PC-3 (cell line): ENCODE measurements at regions of chr21 and their contacts with region 1.

Region 1: GRCh38 chr21:28537371-28538079 is 455.2 kb downstream of the LTN1 start:
- DNase-seq: peak; percentile 99
- ATAC-seq: peak; percentile 44
- H3K4me3 ChIP-seq: no peak overlapping the region
- H3K27ac ChIP-seq: peak overlapping the region; percentile 97
- H3K4me1 ChIP-seq: peaks cover 52% of the 10 kb centered on the region
- H3K27me3 ChIP-seq: no peaks in the 10 kb centered on the region
- CTCF ChIP-seq: no peak

Region 2: DNA sequence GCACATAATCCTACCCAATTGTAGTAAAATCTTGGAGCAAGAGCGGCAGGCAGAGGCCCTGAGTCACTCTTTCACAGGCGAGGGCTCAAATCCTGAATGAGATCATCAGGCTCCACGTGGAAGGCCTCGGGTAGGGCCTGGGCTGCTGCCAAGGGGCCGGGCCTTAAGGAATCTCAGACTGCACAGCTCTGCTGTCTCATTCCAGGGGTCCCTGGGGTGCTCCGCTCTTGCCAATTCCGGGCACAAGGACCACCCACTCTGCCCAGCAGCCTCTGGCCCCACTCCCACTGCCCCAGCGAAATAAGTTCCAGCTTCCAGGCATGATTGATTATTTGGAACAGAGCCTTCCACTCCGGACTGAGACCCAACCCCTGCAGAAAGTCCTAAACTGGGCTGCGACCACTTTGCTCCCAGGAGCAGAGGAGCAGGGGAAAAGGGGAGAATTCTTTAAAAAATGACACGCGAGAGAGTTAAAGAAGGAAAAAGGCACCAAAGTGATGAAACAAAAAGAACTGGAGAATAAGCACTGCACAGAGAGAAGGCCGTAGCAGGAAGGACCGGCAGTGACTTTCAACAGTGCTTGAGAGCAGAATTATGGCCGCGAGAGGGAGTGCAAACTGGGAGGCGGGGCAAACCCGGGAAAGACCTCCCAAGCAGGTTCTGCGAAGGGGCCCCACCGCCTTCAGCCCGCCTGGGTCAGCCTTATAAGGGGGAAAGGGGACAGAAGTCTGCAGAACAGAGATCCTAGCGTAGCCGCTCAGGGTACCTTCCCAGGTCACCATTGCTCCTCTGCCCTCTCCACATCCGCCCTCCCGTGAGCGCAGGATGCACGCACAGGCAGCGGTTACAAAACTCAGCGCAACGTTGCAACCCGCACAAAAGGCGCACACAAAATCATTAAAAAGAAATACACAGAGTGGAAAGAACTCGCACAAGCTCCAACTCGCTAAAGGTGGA is 1694.3 kb before region 1 on chr21:
- CTCF ChIA-PET with region 1: no interaction called
- POLR2A ChIA-PET with region 1: no interaction called
- intact Hi-C with region 1: loop called (anchors 5 kb)
- DNase-seq: peak; percentile 96
- ATAC-seq: peak; percentile 58
- H3K4me3 ChIP-seq: peak overlapping the region; percentile 78
- H3K27ac ChIP-seq: peak overlapping the region; percentile 66
- H3K4me1 ChIP-seq: peaks cover 17% of the 10 kb centered on the region
- H3K27me3 ChIP-seq: no peaks in the 10 kb centered on the region
- CTCF ChIP-seq: 0 out of 2 replicates have a peak, but pooled peaks have one; percentile 35

Region 3: DNA sequence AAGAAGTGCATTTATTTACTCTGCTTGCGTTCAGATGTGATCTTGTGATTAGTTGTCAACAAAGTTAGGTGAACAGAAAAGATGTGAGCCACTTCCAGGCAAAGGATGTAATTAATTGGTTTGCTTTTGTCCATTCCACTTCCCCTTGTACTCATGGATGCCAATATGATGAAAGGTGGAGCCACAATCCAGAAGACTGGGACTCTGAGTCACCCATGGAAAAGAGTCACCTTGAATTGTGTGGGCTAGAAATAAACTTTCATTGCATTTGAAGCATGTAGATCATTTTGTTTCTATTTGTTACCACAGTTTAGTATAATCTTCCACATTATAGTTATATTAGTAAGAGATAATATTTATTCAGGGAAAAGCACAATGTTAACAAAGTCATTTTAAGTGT is 229.0 kb before region 1 on chr21:
- CTCF ChIA-PET with region 1: no interaction called
- POLR2A ChIA-PET with region 1: interaction called, 12 read pairs
- intact Hi-C with region 1: no loop called
- DNase-seq: peak; percentile 74
- ATAC-seq: peak; percentile 98
- H3K4me3 ChIP-seq: no peak overlapping the region
- H3K27ac ChIP-seq: peak overlapping the region; percentile 9; the same call in 1 of the 2 replicates
- H3K4me1 ChIP-seq: 0 out of 2 replicates have a peak, but pooled peaks cover 9% of the 10 kb centered on the region
- H3K27me3 ChIP-seq: no peaks in the 10 kb centered on the region
- CTCF ChIP-seq: no peak

Region 4: DNA sequence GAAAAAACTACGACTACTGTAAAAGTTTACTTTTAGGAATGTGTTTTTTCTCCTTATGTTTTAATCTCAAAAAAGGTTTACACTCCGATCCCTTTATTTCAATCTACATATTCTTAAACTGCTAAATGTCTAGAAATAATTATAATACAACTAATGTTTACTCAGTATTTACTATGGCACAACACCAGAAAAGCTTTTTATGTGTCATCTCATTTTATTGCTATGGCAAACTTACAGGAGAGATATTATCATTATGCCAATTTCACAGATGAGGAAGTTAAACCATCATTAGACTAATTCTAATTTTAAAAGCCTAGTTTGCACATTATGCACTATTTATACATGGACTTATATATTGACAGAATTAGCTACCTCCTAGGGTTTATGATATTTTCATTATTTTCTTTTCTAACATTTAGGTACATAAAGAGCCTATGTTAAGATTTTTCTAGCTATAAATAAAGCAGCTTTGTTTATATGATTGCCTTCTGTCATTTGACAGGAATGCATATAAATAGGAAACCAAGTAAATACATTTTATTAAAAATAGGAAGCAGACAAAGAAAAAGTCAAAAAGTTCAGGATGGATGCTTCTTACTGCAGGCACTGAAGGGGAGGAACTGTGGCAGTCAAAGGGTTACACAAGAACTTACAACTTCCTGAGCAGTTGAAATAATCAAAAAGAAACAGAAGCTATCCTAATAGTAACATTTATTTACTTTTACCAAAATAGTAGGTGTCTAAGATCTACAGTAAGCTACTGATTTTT is 12.7 kb after region 1 on chr21:
- CTCF ChIA-PET with region 1: no interaction called
- POLR2A ChIA-PET with region 1: interaction called, 5 read pairs
- intact Hi-C with region 1: loop called (anchors 1 kb)
- DNase-seq: peak; percentile 92
- ATAC-seq: peak; percentile 79
- H3K4me3 ChIP-seq: peak overlapping the region; percentile 22; the same call in 1 of the 2 replicates
- H3K27ac ChIP-seq: peak overlapping the region; percentile 91
- H3K4me1 ChIP-seq: peaks cover 25% of the 10 kb centered on the region
- H3K27me3 ChIP-seq: no peaks in the 10 kb centered on the region
- CTCF ChIP-seq: no peak

Region 5: DNA sequence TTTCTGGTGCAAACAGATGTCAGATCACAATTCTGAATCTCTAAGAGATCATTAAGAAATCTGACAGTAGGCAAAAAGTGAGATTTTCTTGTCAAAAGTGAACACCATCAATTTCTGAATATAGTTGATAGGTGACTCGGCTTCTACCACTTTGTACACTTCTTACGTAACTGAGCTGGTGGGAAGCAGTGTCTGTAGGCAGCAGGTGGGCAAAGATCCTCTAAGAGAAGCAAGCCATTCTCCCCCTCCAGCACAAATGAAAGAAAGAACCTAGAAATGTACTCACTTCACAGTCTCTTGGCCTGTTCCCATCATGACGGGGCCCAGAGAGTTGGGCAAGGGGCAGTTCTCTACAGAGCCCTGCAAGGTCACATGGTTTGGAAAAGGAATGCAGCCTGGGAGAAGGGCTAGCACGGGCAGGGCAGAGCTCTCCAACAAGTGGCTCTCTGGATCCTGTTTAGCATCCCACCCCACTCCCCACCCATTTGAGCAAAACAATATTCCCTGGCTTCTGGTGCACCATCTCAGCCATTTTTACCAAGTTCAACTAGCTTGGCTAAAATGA is 42.5 kb after region 1 on chr21:
- CTCF ChIA-PET with region 1: no interaction called
- POLR2A ChIA-PET with region 1: no interaction called
- intact Hi-C with region 1: no loop called
- DNase-seq: no peak
- ATAC-seq: no peak
- H3K4me3 ChIP-seq: no peak overlapping the region
- H3K27ac ChIP-seq: no peak overlapping the region
- H3K4me1 ChIP-seq: no peaks in the 10 kb centered on the region
- H3K27me3 ChIP-seq: no peaks in the 10 kb centered on the region
- CTCF ChIP-seq: no peak

Region 6: GRCh38 chr21:28671549-28672195 is 134.1 kb after region 1 on chr21:
- CTCF ChIA-PET with region 1: interaction called, 3 read pairs
- POLR2A ChIA-PET with region 1: no interaction called
- intact Hi-C with region 1: loop called (anchors 1 kb)
- DNase-seq: peak; percentile 84
- ATAC-seq: peak; percentile 87
- H3K4me3 ChIP-seq: no peak overlapping the region
- H3K27ac ChIP-seq: peak overlapping the region; percentile 92
- H3K4me1 ChIP-seq: peaks cover 29% of the 10 kb centered on the region
- H3K27me3 ChIP-seq: no peaks in the 10 kb centered on the region
- CTCF ChIP-seq: no peak

Region 7: DNA sequence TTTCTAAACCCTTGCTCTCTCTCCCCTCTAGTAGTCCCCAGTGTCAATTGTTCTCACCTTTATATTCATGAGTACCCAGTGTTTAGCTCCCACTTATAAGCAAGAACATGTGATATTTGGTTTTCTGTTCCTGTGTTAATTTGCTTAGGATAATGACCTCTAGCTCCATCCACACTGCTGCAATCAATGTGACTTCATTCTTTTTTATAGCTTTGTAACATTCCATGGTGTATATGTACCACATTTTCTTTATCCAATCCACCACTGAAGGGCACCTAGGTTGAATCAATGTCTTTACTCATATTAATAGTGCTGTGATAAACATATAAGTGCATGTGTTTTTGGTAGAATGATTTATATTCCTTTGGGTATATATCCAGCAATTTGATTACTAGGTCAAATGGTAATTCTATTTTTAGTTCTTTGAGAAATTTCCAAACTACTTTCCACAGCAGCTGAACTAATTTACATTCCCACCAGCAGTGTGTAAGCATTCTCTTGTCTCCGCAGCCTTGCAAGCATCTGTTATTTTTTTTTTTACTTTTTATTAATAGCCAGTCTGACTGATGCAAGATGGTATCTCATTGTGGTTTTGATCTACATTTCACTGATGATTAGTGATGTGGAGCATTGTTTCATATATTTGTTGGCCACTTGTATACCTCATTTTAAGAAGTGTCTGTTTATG is 177.4 kb after region 1 on chr21:
- CTCF ChIA-PET with region 1: no interaction called
- POLR2A ChIA-PET with region 1: no interaction called
- intact Hi-C with region 1: no loop called
- DNase-seq: no peak
- ATAC-seq: no peak
- H3K4me3 ChIP-seq: no peak overlapping the region
- H3K27ac ChIP-seq: no peak overlapping the region
- H3K4me1 ChIP-seq: no peaks in the 10 kb centered on the region
- H3K27me3 ChIP-seq: no peaks in the 10 kb centered on the region
- CTCF ChIP-seq: no peak